Transverse colon (tissue), 4 donors: ENCODE measurements at regions of chr18 and their contacts with region 1.

Region 1: DNA sequence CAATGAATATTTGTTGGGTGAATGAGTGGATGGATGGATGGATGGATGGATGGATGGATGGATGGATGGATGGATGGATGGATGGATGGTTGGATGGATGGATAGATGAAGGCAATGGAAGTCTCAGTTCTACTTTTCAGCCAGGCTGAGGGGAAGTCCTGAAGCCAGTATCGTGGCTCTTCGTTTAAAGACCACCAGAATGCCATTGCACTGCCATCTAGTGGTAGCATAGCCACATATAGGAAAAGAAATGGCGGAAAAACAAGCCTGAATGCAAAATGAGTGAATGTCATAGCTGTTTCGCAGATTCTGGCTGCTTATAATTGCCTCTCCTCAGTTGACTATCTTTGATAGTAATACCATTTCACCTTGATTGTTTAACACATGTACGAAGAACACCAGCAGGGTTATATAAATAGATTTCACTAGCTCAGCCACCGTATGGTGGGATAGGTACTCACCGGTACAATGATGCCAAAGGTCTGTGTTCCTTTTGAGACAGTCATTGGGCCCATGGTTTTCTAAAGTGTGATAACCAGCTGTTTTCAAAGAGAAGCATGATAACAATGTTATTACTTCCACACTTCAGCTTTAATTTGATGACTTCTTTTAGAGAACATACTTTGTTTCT is 62.3 kb upstream of the GREB1L start:
- DNase-seq: peak; percentile 35
- H3K4me3 ChIP-seq: no peak overlapping the region
- H3K27ac ChIP-seq: no peak overlapping the region
- H3K4me1 ChIP-seq: no peaks in the 10 kb centered on the region
- H3K27me3 ChIP-seq: no peaks in the 10 kb centered on the region
- CTCF ChIP-seq: peak; percentile 59 to 75 (median 65)
- EP300 ChIP-seq: no peak
- POLR2A ChIP-seq: no peak

Region 2: DNA sequence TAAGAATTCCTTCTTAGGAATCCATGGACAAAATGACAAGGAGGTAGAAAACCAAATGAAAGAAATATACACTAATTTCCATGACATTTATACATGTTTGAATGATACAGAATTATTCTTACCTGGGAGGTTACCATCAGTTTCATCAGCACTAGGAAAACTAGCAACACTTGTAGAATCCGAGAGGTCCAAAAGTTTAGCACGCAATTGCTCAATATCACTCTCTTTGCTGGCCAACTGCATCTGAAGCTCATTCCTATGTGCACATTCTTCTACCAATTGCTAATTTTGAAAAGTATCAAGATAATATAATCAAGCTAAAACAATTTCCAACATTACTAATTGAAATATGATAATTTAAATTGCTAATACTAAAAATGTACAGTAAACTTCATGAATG is 212.9 kb before region 1 on chr18:
- in situ Hi-C with region 1: loop called in 1 of 4 experiments (anchors 10 kb)
- intact Hi-C with region 1: loop called (anchors 10 kb)
- DNase-seq: no peak
- H3K4me3 ChIP-seq: no peak overlapping the region
- H3K27ac ChIP-seq: no peak overlapping the region
- H3K4me1 ChIP-seq: no peaks in the 10 kb centered on the region
- H3K27me3 ChIP-seq: no peaks in the 10 kb centered on the region
- CTCF ChIP-seq: no peak
- EP300 ChIP-seq: no peak
- POLR2A ChIP-seq: no peak

Region 3: GRCh38 chr18:21099442-21099841 is 80.3 kb before region 1 on chr18:
- in situ Hi-C with region 1: loop called in 1 of 4 experiments (anchors 25 kb)
- intact Hi-C with region 1: no loop called
- DNase-seq: no peak
- H3K4me3 ChIP-seq: no peak overlapping the region
- H3K27ac ChIP-seq: no peak overlapping the region
- H3K4me1 ChIP-seq: peaks cover 5 to 23% (median 22%) of the 10 kb centered on the region in 4 donors
- H3K27me3 ChIP-seq: no peaks in the 10 kb centered on the region
- CTCF ChIP-seq: no peak
- EP300 ChIP-seq: no peak
- POLR2A ChIP-seq: no peak

Region 4: GRCh38 chr18:21298351-21298750 is 118.6 kb after region 1 on chr18:
- in situ Hi-C with region 1: loop called in 1 of 4 experiments (anchors 25 kb)
- intact Hi-C with region 1: no loop called
- DNase-seq: no peak
- H3K4me3 ChIP-seq: no peak overlapping the region
- H3K27ac ChIP-seq: no peak overlapping the region
- H3K4me1 ChIP-seq: no peaks in the 10 kb centered on the region
- H3K27me3 ChIP-seq: no peaks in the 10 kb centered on the region
- CTCF ChIP-seq: no peak
- EP300 ChIP-seq: no peak
- POLR2A ChIP-seq: no peak

Region 5: GRCh38 chr18:21955757-21956652 is 776.3 kb after region 1 on chr18:
- in situ Hi-C with region 1: loop called in 1 of 4 experiments (anchors 25 kb)
- intact Hi-C with region 1: no loop called
- DNase-seq: peak; percentile 85
- H3K4me3 ChIP-seq: no peak overlapping the region
- H3K27ac ChIP-seq: no peak overlapping the region
- H3K4me1 ChIP-seq: no peaks in the 10 kb centered on the region
- H3K27me3 ChIP-seq: no peaks in the 10 kb centered on the region
- CTCF ChIP-seq: peak; percentile 78 to 92 (median 90)
- EP300 ChIP-seq: no peak
- POLR2A ChIP-seq: no peak